SK-N-SH (cell line): ENCODE measurements at regions of chr20 and their contacts with region 1.

Region 1: GRCh38 chr20:62302341-62303058 is at the start of gene ADRM1:
- DNase-seq: peak; percentile 99
- H3K4me3 ChIP-seq: peak within 1 kb of the TSS; percentile 96 to 97
- H3K27ac ChIP-seq: peak within 1 kb of the TSS; percentile 80 to 94
- H3K4me1 ChIP-seq: peaks cover 7 to 26% of the 10 kb centered on the region in 2 experiments; a peak in 2 of 4 replicates
- H3K27me3 ChIP-seq: no peaks in the 10 kb centered on the region
- CTCF ChIP-seq: peak; percentile 82
- EP300 ChIP-seq: peak in 1 of 2 experiments; percentile 66; a peak in 1 of 4 replicates
- RAD21 ChIP-seq: peak; percentile 43
- polyA plus RNA-seq, gene ADRM1: 137 and 142 TPM in 2 replicates

Region 2: GRCh38 chr20:62316331-62317166 is 14.0 kb after region 1 on chr20:
- CTCF ChIA-PET with region 1: interaction called, 13 read pairs
- POLR2A ChIA-PET with region 1: no interaction called
- DNase-seq: no peak
- H3K4me3 ChIP-seq: no peak overlapping the region
- H3K27ac ChIP-seq: no peak overlapping the region
- H3K4me1 ChIP-seq: no peaks in the 10 kb centered on the region
- H3K27me3 ChIP-seq: no peaks in the 10 kb centered on the region
- CTCF ChIP-seq: no peak
- EP300 ChIP-seq: no peak
- RAD21 ChIP-seq: no peak